Activated CD4-positive, alpha-beta memory T cell treated with anti-CD3 and anti-CD28 coated beads for 36 hours (primary cell): ENCODE measurements at regions of chr11 and their contacts with region 1.

Region 1: GRCh38 chr11:1652771-1653540 is 23.4 kb downstream of the KRTAP5-5 start:
- DNase-seq: peak; percentile 79
- H3K4me3 Mint-ChIP-seq: no peak overlapping the region
- H3K27ac Mint-ChIP-seq: no peak overlapping the region
- H3K4me1 Mint-ChIP-seq: no peaks in the 10 kb centered on the region
- H3K27me3 Mint-ChIP-seq: peaks cover 20% of the 10 kb centered on the region

Region 2: DNA sequence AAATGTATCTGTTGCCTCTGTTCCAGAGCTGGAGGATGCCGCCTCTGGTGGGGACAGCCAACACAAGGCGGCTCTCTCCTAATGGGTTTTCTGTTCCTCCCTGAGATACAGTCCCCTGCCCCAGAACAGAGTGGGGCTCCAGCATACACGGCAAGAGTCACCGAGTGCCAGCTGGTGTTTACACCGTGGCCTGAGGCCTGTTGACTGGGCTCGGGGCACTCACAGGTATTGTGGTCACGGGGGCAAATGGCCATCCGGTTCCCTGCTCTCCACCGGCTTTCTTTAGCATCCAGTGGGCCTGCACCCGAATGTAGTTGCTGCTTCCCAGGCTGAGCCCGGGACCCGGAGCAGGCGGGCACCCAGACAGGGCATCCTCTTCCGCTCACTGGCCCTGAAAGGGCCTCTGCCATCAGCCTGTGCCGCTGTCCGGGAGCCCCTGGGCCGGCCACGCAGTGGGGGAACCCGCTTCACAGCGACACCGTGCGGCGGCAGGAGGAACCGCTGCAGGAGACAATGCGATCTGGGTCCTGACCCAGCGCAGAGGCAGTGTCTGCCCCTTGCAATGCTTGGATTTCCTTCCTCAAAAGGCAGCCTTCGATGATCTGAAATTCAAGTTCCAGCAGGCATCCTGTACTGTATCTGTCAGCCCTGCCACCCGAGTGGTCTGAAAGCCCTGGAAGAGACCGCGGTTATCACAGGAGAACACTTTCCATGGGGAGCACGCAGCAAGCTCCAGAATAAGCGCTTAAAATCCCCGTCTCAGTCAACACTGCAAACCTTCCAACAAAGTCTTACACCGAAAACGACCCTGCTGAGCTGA is 24.2 kb before region 1 on chr11:
- CTCF ChIA-PET with region 1: interaction called, 16 read pairs
- POLR2A ChIA-PET with region 1: no interaction called
- intact Hi-C with region 1: no loop called
- DNase-seq: peak; percentile 73
- H3K4me3 Mint-ChIP-seq: no peak overlapping the region
- H3K27ac Mint-ChIP-seq: no peak overlapping the region
- H3K4me1 Mint-ChIP-seq: peaks cover 7% of the 10 kb centered on the region
- H3K27me3 Mint-ChIP-seq: peaks cover 27% of the 10 kb centered on the region

Region 3: GRCh38 chr11:1640076-1640946 is 12.6 kb before region 1 on chr11:
- CTCF ChIA-PET with region 1: interaction called, 17 read pairs
- POLR2A ChIA-PET with region 1: no interaction called
- intact Hi-C with region 1: no loop called
- DNase-seq: peak; percentile 33
- H3K4me3 Mint-ChIP-seq: no peak overlapping the region
- H3K27ac Mint-ChIP-seq: no peak overlapping the region
- H3K4me1 Mint-ChIP-seq: no peaks in the 10 kb centered on the region
- H3K27me3 Mint-ChIP-seq: peaks cover 10% of the 10 kb centered on the region

Region 4: DNA sequence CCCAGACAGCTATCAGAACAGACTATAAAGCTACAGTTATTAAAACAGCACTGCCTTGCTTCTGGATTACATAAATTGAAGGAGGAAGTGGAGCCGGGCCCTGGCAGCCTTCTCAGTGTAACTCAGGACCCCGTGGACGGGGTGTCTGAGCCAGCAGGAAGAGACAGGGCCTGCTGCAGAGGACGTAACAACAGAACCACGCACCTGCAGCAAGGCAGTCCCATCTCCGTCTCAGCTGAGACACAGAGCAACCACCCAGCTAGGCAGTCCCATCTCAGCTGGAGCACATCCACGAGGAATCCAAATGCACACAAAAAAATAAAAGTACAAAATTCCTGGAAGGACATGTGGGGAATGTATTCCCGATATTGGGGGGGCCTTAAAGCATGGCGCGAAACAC is 26.9 kb after region 1 on chr11:
- CTCF ChIA-PET with region 1: interaction called, 12 read pairs
- POLR2A ChIA-PET with region 1: no interaction called
- intact Hi-C with region 1: no loop called
- DNase-seq: no peak
- H3K4me3 Mint-ChIP-seq: no peak overlapping the region
- H3K27ac Mint-ChIP-seq: no peak overlapping the region
- H3K4me1 Mint-ChIP-seq: no peaks in the 10 kb centered on the region
- H3K27me3 Mint-ChIP-seq: peaks cover 20% of the 10 kb centered on the region

Region 5: GRCh38 chr11:1832211-1832919 is 179.4 kb after region 1 on chr11:
- CTCF ChIA-PET with region 1: interaction called, 102 read pairs
- POLR2A ChIA-PET with region 1: no interaction called
- intact Hi-C with region 1: loop called (anchors 2 kb)
- DNase-seq: peak; percentile 66
- H3K4me3 Mint-ChIP-seq: no peak overlapping the region
- H3K27ac Mint-ChIP-seq: no peak overlapping the region
- H3K4me1 Mint-ChIP-seq: no peaks in the 10 kb centered on the region
- H3K27me3 Mint-ChIP-seq: peaks cover 5% of the 10 kb centered on the region